ENCODE measurements at regions of chr1 and their contacts with region 1.

Region 1: DNA sequence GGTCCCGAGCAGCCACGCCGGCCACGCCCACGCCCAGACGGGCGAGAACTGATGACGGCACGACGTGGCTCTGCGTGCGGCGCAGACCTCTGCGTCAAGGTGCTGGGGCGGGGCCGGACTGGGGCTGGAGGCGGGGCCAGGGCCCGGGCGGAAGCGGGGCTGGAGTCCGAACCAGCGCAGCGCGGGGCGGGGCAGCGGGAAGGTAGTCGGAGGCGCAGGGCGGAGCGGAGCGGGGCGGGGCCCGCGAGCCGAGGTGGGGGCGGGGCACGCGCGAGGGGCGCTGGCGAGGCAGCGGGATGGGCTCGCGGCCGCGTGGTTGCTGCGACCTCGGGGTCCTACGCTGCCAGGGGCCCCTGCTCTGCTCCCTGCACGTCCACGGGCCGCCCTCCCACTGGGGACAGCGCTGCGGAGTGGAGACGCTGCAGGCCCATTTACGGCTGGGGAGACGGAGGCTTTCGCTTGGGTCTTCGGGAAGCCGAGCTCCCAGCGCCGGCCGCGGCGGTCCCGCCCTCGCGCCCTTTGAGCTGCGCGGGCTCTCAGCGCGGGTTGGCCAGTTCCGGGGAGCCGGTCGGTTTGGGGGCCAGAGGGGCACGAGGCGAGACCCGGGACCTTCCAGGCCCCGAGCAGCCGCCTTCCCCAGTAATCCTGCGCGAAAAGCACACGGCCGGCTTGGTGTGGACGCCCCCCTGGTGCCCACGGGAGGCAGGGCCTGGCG is at the start of gene PEX10:
- DNase-seq: peak; percentile 100
- ATAC-seq: peak; percentile 89
- H3K4me3 Mint-ChIP-seq: peak within 1 kb of the TSS; percentile 83
- H3K27ac Mint-ChIP-seq: peak within 1 kb of the TSS; percentile 85
- H3K4me1 Mint-ChIP-seq: peaks cover 38% of the 10 kb centered on the region
- H3K27me3 Mint-ChIP-seq: no peaks in the 10 kb centered on the region
- total RNA-seq, gene PEX10: 15.1 to 17.7 TPM

Region 2: DNA sequence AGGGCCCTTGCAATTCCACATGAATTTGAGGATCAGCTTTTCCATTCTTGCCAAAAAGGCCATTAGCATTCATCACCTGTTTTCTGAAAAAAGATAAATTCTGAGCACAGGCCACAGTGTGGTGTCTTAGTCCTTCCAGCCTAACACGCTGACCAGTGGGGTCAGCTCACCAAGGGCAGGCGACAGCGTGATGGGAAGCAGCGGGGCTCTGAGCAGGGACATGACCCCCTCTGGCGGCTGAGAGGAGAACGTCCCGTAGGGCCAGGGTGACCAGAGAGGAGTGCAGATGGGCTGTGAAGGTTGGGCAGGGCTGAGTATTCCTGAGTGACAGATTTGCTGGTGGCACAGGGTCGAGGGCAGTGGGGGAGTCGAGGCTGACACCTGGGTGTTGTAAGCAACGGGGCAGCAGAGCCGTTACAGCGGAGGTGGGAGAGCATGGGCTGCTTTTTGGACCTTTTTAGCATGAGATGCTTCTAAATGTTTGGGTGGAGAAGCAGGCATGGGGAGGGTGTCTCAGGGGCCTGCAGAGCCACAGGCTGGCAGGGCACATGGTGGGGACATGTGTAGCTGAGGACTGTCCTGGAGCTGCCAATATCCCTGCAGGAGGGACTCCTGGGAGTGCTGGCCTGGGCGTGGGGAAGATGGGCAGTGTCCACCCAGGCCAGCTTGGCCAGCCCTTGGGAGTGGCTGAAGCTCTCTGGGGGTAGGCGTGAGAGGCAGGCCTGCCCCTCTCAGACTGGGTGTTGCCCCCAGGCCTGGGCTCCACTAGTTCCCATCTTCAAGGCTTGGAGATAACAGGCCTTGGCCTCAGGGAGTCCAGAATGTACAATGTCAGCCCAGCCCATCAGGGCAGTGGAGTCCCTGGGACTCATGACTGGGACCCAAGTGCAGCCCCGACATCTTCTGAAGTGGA is 506.2 kb before region 1 on chr1:
- CTCF ChIA-PET with region 1: no interaction called
- POLR2A ChIA-PET with region 1: no interaction called
- intact Hi-C with region 1: loop called in 1 of 2 experiments (anchors 2 kb)
- DNase-seq: peak; percentile 86
- ATAC-seq: peak; percentile 52
- H3K4me3 Mint-ChIP-seq: peak overlapping the region; percentile 0
- H3K27ac Mint-ChIP-seq: no peak overlapping the region
- H3K4me1 Mint-ChIP-seq: peaks cover 14% of the 10 kb centered on the region
- H3K27me3 Mint-ChIP-seq: no peaks in the 10 kb centered on the region

Region 3: GRCh38 chr1:2391041-2391930 is 21.4 kb before region 1 on chr1 and contains the starts of genes MORN1 and RER1:
- CTCF ChIA-PET with region 1: interaction called, 3 read pairs
- POLR2A ChIA-PET with region 1: no interaction called
- intact Hi-C with region 1: loop called in 1 of 2 experiments (anchors 1 kb)
- DNase-seq: peak; percentile 100
- ATAC-seq: peak; percentile 99
- H3K4me3 Mint-ChIP-seq: peak within 1 kb of the TSS; percentile 89
- H3K27ac Mint-ChIP-seq: peak within 1 kb of the TSS; percentile 76
- H3K4me1 Mint-ChIP-seq: peaks cover 38% of the 10 kb centered on the region
- H3K27me3 Mint-ChIP-seq: no peaks in the 10 kb centered on the region
- total RNA-seq, gene MORN1: 5.1 to 6.1 TPM
- total RNA-seq, gene RER1: 146 to 152 TPM

Region 4: GRCh38 chr1:2496087-2496622 is 83.5 kb after region 1 on chr1:
- CTCF ChIA-PET with region 1: no interaction called
- POLR2A ChIA-PET with region 1: no interaction called
- intact Hi-C with region 1: no loop called
- DNase-seq: no peak
- ATAC-seq: no peak
- H3K4me3 Mint-ChIP-seq: no peak overlapping the region
- H3K27ac Mint-ChIP-seq: no peak overlapping the region
- H3K4me1 Mint-ChIP-seq: peaks cover 25% of the 10 kb centered on the region
- H3K27me3 Mint-ChIP-seq: no peaks in the 10 kb centered on the region

Region 5: DNA sequence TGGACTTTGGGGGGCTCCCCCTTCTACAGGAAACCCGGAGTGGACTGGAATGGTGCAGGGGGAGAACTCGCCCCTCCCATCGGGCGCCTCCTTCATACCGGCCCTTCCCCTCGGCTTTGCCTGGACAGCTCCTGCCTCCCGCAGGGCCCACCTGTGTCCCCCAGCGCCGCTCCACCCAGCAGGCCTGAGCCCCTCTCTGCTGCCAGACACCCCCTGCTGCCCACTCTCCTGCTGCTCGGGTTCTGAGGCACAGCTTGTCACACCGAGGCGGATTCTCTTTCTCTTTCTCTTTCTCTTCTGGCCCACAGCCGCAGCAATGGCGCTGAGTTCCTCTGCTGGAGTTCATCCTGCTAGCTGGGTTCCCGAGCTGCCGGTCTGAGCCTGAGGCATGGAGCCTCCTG is 143.6 kb after region 1 on chr1 and contains the start of gene TNFRSF14:
- CTCF ChIA-PET with region 1: no interaction called
- POLR2A ChIA-PET with region 1: no interaction called
- intact Hi-C with region 1: loop called in 1 of 2 experiments (anchors 2 kb)
- DNase-seq: peak; percentile 85
- ATAC-seq: peak; percentile 61
- H3K4me3 Mint-ChIP-seq: peak within 1 kb of the TSS; percentile 98
- H3K27ac Mint-ChIP-seq: peak within 1 kb of the TSS; percentile 98
- H3K4me1 Mint-ChIP-seq: peaks cover 36% of the 10 kb centered on the region
- H3K27me3 Mint-ChIP-seq: no peaks in the 10 kb centered on the region
- total RNA-seq, gene TNFRSF14: 135 to 145 TPM

Region 6: GRCh38 chr1:2801535-2802291 is 389.0 kb after region 1 on chr1 and contains the start of gene TTC34:
- CTCF ChIA-PET with region 1: interaction called, 4 read pairs
- POLR2A ChIA-PET with region 1: no interaction called
- intact Hi-C with region 1: loop called in 1 of 2 experiments (anchors 1 kb)
- DNase-seq: peak; percentile 81
- ATAC-seq: peak; percentile 89
- H3K4me3 Mint-ChIP-seq: no peak within 1 kb of the TSS
- H3K27ac Mint-ChIP-seq: no peak within 1 kb of the TSS
- H3K4me1 Mint-ChIP-seq: no peaks in the 10 kb centered on the region
- H3K27me3 Mint-ChIP-seq: peaks cover 5% of the 10 kb centered on the region
- total RNA-seq, gene TTC34: 1.3 TPM

Region 7: DNA sequence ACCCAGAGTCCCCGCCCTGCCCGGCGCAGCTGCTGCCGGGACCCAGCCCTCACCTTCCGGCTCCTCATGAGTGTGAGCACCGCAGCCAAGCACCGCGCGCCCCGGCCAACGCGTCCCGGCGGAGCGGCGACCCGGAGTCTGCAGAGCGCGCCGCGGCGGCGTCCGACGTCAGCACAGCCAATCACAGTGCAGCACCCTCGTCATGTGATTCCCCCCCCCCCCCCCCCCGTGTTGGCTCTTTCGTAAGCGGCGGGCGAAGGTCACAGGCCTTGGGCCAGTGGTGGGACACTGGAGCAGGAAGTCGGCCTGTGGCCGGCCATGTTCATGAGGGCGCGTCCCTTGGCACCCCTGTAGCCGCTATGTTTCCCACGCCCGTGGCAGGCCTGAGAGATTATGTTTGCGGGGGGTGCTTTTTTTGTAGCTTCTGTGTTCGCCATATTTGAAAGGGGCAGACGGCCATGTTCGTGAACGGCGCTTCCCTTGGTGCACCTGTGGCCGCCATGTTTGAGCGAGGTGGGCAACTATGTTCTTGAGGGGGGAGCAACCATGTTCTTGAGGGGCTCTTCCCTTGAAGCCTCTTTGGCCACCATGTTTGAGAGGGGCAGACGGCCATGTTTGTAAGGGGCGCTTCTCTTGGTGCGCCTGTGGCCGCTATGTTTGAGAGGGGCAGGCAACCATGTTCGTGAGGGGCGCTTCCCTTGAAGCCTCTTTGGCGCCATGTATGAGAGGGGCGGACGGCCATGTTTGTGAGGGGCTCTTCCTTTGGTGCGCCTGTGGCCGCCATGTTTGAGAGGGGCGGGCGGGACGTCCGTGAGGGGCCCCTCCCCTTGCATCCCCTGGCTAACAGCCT is 1487.7 kb after region 1 on chr1 and contains the start of gene C1orf174:
- CTCF ChIA-PET with region 1: no interaction called
- POLR2A ChIA-PET with region 1: no interaction called
- intact Hi-C with region 1: loop called in 1 of 2 experiments (anchors 2 kb)
- DNase-seq: peak; percentile 94
- ATAC-seq: peak; percentile 76
- H3K4me3 Mint-ChIP-seq: peak within 1 kb of the TSS; percentile 87
- H3K27ac Mint-ChIP-seq: peak within 1 kb of the TSS; percentile 98
- H3K4me1 Mint-ChIP-seq: peaks cover 51% of the 10 kb centered on the region
- H3K27me3 Mint-ChIP-seq: no peaks in the 10 kb centered on the region
- total RNA-seq, gene C1orf174: 39.8 to 49.4 TPM